Psoas muscle (tissue), 8 donors: ENCODE measurements at regions of chr5 and their contacts with region 1.

Region 1: GRCh38 chr5:62460578-62460983 is 48.0 kb downstream of the IPO11 start:
- DNase-seq: no peak
- ATAC-seq: peak in 1 of 4 donors; percentile 63
- H3K4me3 ChIP-seq: no peak overlapping the region
- H3K27ac ChIP-seq: no peak overlapping the region
- H3K4me1 ChIP-seq: peaks cover 3% of the 10 kb centered on the region
- H3K27me3 ChIP-seq: no peaks in the 10 kb centered on the region
- CTCF ChIP-seq: peak; percentile 69

Region 2: GRCh38 chr5:62385131-62385530 is 75.5 kb before region 1 on chr5:
- intact Hi-C with region 1: no loop called
- DNase-seq: no peak
- ATAC-seq: no peak
- H3K4me3 ChIP-seq: no peak overlapping the region
- H3K27ac ChIP-seq: no peak overlapping the region
- H3K4me1 ChIP-seq: no peaks in the 10 kb centered on the region
- H3K27me3 ChIP-seq: no peaks in the 10 kb centered on the region
- CTCF ChIP-seq: no peak

Region 3: DNA sequence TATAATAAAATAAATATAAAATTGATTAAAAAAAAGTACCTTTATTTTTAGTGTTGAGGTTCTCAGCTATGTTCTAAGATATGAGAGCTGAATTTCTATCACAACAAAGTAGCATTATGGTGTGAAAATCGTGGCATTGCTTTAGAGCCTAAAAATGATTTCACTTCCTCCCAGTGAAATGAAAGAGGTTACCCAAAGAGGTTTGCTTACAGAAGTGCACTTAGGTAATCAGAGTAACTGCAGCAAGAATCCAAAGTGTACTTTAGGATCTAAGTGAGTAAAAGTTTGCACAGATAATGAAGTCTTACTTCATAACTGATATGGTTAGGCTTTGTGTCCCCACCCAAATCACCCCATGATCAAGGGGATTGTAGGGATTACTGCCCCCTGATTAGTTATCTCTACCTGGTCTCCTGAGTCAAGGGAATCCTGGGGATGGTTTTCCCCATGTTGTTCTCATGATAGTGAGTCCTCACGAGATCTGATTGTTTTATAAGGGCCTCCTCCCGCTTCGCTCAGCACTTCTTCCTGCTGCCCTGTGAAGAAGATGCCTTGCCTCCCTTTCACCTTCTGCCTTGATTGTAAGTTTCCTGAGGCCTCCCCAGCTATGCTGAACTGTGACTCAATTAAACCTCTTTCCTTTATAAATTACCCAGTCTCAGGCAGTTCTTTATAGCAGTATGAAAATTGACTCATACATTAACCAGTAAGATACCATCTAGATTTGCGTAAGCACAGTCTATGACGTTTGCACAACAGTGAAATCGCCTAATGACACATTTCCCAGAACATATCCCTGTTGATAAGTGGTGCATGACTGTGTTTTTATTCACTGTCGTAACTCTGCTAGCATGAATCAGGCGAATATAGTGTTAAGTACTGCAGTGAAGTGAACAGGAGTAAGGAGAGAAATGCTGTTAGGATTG is 77.7 kb after region 1 on chr5:
- intact Hi-C with region 1: no loop called
- DNase-seq: no peak
- ATAC-seq: no peak
- H3K4me3 ChIP-seq: no peak overlapping the region
- H3K27ac ChIP-seq: no peak overlapping the region
- H3K4me1 ChIP-seq: no peaks in the 10 kb centered on the region
- H3K27me3 ChIP-seq: no peaks in the 10 kb centered on the region
- CTCF ChIP-seq: no peak

Region 4: GRCh38 chr5:62631909-62632580 is 171.5 kb after region 1 on chr5:
- intact Hi-C with region 1: no loop called
- DNase-seq: no peak
- ATAC-seq: no peak
- H3K4me3 ChIP-seq: no peak overlapping the region
- H3K27ac ChIP-seq: no peak overlapping the region
- H3K4me1 ChIP-seq: no peaks in the 10 kb centered on the region
- H3K27me3 ChIP-seq: no peaks in the 10 kb centered on the region
- CTCF ChIP-seq: no peak

Region 5: DNA sequence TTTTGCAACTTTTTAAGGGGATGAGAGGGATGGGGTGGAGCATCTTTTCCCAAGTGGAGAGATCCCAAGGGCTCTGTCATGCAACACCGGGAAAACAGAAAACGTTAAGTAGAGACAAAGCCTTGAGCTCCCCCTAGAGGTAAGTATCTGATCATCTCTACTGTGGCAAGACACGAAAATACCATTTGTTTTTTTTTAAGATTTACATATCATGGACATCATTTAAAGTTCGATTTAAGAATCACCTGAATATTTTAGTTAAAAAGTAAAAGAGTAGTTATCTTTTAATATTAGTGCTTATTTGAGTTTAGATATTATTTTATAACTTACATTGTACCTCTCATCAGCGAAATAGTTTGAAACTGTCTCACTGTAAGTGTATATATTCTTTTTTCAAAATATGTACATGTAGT is 318.4 kb after region 1 on chr5:
- intact Hi-C with region 1: loop called (anchors 2 to 10 kb)
- DNase-seq: no peak
- ATAC-seq: peak in 2 of 4 donors; percentile 57 to 77
- H3K4me3 ChIP-seq: no peak overlapping the region
- H3K27ac ChIP-seq: no peak overlapping the region
- H3K4me1 ChIP-seq: no peaks in the 10 kb centered on the region
- H3K27me3 ChIP-seq: no peaks in the 10 kb centered on the region
- CTCF ChIP-seq: peak; percentile 63